ENCODE measurements at regions of chr3 and their contacts with region 1.

Region 1: GRCh38 chr3:16978234-16978920 is 93.6 kb downstream of the PLCL2 start:
- DNase-seq: no peak
- ATAC-seq: no peak
- H3K4me3 Mint-ChIP-seq: no peak overlapping the region
- H3K27ac Mint-ChIP-seq: no peak overlapping the region
- H3K4me1 Mint-ChIP-seq: peaks cover 59% of the 10 kb centered on the region
- H3K27me3 Mint-ChIP-seq: no peaks in the 10 kb centered on the region
- CTCF ChIP-seq: no peak

Region 2: GRCh38 chr3:16697443-16698147 is 280.8 kb before region 1 on chr3:
- CTCF ChIA-PET with region 1: no interaction called
- POLR2A ChIA-PET with region 1: no interaction called
- intact Hi-C with region 1: no loop called
- DNase-seq: no peak
- ATAC-seq: peak; percentile 37
- H3K4me3 Mint-ChIP-seq: peak overlapping the region; percentile 74
- H3K27ac Mint-ChIP-seq: peak overlapping the region; percentile 80
- H3K4me1 Mint-ChIP-seq: peaks cover 61% of the 10 kb centered on the region
- H3K27me3 Mint-ChIP-seq: no peaks in the 10 kb centered on the region
- CTCF ChIP-seq: no peak

Region 3: DNA sequence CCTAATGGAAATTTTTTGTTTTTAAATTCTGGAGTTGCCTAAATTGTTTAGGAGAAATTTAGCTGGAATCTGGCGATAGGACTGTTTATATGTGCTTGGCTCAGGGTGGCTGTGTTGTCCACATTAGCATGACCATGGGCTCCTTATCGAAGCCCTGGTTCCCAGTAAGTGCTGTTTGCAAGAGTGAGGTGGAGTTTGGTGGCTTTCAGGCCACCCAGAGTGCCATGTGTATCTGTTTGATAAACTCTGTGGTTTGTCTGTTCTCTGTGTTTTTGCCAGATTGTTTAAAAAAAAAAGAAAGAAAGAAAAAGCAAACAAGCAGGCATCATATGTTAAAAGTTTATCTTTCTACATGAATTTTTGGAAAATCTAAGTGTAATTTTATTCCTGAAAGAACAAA is 42.1 kb before region 1 on chr3:
- CTCF ChIA-PET with region 1: no interaction called
- POLR2A ChIA-PET with region 1: no interaction called
- intact Hi-C with region 1: loop called (anchors 5 kb)
- DNase-seq: no peak
- ATAC-seq: no peak
- H3K4me3 Mint-ChIP-seq: peak overlapping the region; percentile 15
- H3K27ac Mint-ChIP-seq: no peak overlapping the region
- H3K4me1 Mint-ChIP-seq: peaks cover 87% of the 10 kb centered on the region
- H3K27me3 Mint-ChIP-seq: no peaks in the 10 kb centered on the region
- CTCF ChIP-seq: no peak

Measured in activated B cell treated with CpG ODN at 0.5 μM for 24 hours (primary cell).